Activated T-helper 2 cell treated with anti-CD3 and anti-CD28 coated beads, Interferon-gamma antibody, Interleukin-2, Interleukin-4, amounts not matched to agents 10 μg/mL and 5 μg/mL and 100 μg/mL, durations not matched to agents 14 hours and 24 hours and 36 hours (primary cell): ENCODE measurements at regions of chr3 and their contacts with region 1.

Region 1: DNA sequence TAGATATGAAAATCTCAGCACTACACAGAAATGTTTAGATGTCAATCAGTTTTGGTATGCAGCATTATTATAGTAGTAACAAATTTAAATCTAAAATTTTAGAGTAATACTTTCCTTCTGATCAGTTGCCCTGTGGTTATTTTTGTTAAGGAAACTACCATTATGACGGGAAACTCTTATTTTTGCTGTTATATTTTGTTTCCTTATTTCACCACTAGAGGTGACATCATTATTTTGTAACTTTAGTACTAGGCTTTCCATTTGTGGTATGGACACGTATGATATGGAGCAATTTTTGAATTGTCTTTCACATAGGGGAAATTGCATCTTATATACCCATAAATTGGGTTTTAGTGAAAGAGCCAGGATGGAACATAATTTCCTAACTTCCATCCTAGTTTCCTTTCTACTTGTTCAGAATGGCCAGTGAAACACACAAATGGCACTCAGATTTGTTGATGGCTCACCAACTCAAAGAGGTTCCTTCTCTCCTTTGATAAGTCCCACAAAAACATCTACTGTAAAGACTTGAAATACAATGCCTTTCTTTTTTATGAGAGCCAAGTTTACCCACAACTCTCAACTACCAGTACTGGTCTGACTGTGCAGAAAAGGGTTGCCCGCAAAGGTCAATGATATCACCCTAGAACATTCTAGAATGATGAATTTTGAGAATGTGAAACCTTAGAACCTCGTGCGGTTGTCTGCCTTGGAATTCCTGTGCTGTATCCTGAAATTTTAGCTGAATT is 19.4 kb upstream of the PPP4R2 start:
- DNase-seq: no peak
- H3K4me3 Mint-ChIP-seq: no peak overlapping the region
- H3K27ac Mint-ChIP-seq: peak overlapping the region; percentile 87
- H3K4me1 Mint-ChIP-seq: peaks cover 22% of the 10 kb centered on the region
- H3K27me3 Mint-ChIP-seq: peaks cover 2% of the 10 kb centered on the region

Region 2: DNA sequence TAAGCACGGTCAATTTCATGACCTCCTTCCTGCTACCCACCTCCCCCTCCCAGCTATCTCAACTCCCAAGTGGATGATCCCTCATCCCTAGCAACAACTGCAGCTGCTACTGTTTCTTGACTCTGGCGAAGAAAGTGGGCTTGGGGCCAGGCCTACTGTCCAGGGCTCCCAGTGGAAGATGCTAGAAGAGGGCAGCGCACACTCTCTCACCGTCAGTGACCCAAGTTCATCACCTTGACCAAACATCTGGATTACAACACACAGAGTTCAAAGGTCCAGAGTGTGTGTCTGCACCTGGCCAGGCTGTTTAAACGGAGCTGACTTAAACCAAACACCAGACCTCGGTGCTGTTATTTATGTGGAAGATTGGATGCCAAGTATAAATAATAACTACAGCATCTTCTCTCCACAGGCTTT is 514.6 kb before region 1 on chr3:
- intact Hi-C with region 1: no loop called
- DNase-seq: no peak
- H3K4me3 Mint-ChIP-seq: no peak overlapping the region
- H3K27ac Mint-ChIP-seq: no peak overlapping the region
- H3K4me1 Mint-ChIP-seq: peaks cover 12% of the 10 kb centered on the region
- H3K27me3 Mint-ChIP-seq: no peaks in the 10 kb centered on the region

Region 3: DNA sequence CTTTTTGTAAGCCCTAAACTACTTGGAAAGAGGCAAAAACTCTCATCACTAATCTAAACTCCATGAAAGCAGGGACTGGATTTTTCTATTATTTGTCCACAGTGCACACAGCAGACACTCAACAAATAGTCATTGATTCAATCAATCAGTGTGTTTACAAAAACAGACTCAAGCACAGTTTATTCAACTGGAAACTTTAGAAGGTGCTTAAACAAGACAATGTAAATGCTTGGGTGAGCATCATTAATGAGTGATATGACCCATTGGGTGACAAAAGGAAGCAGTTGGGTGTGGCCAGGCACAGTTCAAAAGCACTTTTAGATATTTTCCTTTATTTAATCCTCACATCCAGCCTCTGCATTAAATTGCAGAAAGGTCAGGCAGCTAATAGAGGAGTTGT is 12.6 kb before region 1 on chr3:
- intact Hi-C with region 1: loop called (anchors 1 kb)
- DNase-seq: no peak
- H3K4me3 Mint-ChIP-seq: no peak overlapping the region
- H3K27ac Mint-ChIP-seq: no peak overlapping the region
- H3K4me1 Mint-ChIP-seq: peaks cover 37% of the 10 kb centered on the region
- H3K27me3 Mint-ChIP-seq: no peaks in the 10 kb centered on the region

Region 4: DNA sequence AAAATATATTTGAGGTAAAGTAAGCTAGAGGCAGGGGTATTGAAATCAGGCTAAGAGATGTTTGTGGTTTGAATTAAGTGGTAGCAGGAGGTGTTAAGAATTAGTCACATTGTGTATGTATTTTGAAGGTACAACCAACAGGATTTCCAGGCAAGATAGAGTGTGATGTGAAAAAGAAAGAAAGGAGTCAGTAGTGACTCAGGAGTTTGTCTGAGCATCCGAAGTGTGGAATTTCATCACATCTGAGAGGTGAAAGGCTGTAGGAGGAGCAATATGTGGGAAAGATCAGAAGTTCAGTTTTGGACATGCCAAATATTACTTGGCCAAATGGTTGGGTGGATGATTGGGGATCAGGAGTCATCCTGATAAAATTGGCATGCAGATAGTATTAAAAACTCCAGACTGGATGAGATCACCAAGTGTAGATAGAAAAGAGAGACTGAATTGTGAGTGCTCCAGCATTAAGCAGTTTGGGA is 52.1 kb after region 1 on chr3:
- intact Hi-C with region 1: loop called (anchors 1 kb)
- DNase-seq: no peak
- H3K4me3 Mint-ChIP-seq: peak overlapping the region; percentile 7
- H3K27ac Mint-ChIP-seq: peak overlapping the region; percentile 61
- H3K4me1 Mint-ChIP-seq: peaks cover 62% of the 10 kb centered on the region
- H3K27me3 Mint-ChIP-seq: no peaks in the 10 kb centered on the region

Region 5: GRCh38 chr3:73037369-73037699 is 60.1 kb after region 1 on chr3:
- intact Hi-C with region 1: loop called (anchors 2 kb)
- DNase-seq: no peak
- H3K4me3 Mint-ChIP-seq: no peak overlapping the region
- H3K27ac Mint-ChIP-seq: peak overlapping the region; percentile 70
- H3K4me1 Mint-ChIP-seq: peaks cover 71% of the 10 kb centered on the region
- H3K27me3 Mint-ChIP-seq: no peaks in the 10 kb centered on the region